Transverse colon (tissue), 4 donors: ENCODE measurements at regions of chr7 and their contacts with region 1.

Region 1: GRCh38 chr7:149147072-149147751 is at the start of gene ZNF398:
- DNase-seq: peak; percentile 79
- H3K4me3 ChIP-seq: peak within 1 kb of the TSS; percentile 63 to 94 (median 74)
- H3K27ac ChIP-seq: peak within 1 kb of the TSS; percentile 92 to 94 (median 92)
- H3K4me1 ChIP-seq: peaks cover 0 to 23% (median 4%) of the 10 kb centered on the region in 4 donors
- H3K27me3 ChIP-seq: no peaks in the 10 kb centered on the region
- CTCF ChIP-seq: peak; percentile 58 to 81 (median 66)
- EP300 ChIP-seq: no peak
- POLR2A ChIP-seq: peak; percentile 11
- total RNA-seq, gene ZNF398: 13.7 to 37.0 (median 28.1) TPM

Region 2: GRCh38 chr7:148954766-148955165 is 192.4 kb before region 1 on chr7:
- in situ Hi-C with region 1: no loop called
- intact Hi-C with region 1: no loop called
- DNase-seq: no peak
- H3K4me3 ChIP-seq: no peak overlapping the region
- H3K27ac ChIP-seq: no peak overlapping the region
- H3K4me1 ChIP-seq: no peaks in the 10 kb centered on the region
- H3K27me3 ChIP-seq: no peaks in the 10 kb centered on the region
- CTCF ChIP-seq: no peak
- EP300 ChIP-seq: no peak
- POLR2A ChIP-seq: no peak

Region 3: GRCh38 chr7:149125863-149126661 is 21.1 kb before region 1 on chr7 and contains the start of gene ZNF425:
- in situ Hi-C with region 1: no loop called
- intact Hi-C with region 1: loop called (anchors 2 kb)
- DNase-seq: peak; percentile 94
- H3K4me3 ChIP-seq: peak within 1 kb of the TSS; percentile 61 to 88 (median 80)
- H3K27ac ChIP-seq: peak within 1 kb of the TSS; percentile 92 to 96 (median 95)
- H3K4me1 ChIP-seq: peaks cover 6 to 19% (median 10%) of the 10 kb centered on the region in 4 donors
- H3K27me3 ChIP-seq: no peaks in the 10 kb centered on the region
- CTCF ChIP-seq: peak; percentile 96 to 99 (median 98)
- EP300 ChIP-seq: no peak
- POLR2A ChIP-seq: peak; percentile 96
- total RNA-seq, gene ZNF425: 0.37 to 2.3 (median 1.6) TPM